Activated T-helper 2 cell treated with anti-CD3 and anti-CD28 coated beads, Interferon-gamma antibody, Interleukin-2, Interleukin-4, amounts not matched to agents 10 μg/mL and 5 μg/mL and 100 μg/mL, durations not matched to agents 14 hours and 24 hours and 36 hours (primary cell): ENCODE measurements at regions of chr17 and their contacts with region 1.

Region 1: DNA sequence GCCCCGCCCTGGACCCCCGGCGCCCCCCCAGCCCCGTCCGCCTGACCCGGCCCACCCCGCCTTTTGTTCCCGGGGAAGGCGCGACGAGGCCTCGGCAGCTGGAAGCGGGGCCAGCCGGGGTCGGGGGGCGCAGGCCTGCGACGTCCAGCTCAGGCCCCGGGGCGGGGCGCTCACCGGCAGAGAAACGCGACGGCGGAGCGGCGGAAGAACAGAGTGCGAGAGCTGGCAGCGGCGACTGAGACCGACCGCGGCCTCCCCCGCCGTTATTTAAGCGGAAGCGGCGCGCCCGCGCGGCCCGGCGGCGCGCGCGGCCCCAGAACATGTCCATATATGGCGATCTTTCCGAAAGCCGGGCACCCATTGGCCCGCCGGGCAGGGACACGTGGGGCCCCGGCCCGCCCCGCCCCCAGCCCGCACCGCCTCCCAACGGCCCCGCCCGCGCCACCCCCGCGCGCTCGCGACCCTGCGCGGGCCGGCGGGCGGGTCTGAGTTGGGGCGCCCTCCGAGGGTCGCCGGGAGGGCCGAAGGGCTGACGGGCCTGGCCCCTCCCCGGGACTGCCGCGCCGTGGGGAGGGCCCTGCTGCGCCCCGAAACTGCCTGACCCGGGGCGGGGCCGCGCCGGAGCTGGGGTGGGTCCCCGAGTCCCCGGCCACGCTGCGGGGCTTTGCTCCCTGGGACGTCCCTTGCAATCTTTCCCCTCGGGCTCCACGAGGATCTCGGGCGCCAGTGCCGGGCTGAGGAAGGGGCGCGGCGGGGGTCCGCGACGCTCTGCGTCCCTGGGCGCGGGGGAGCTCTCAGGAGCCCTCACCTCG is at the start of gene ACTG1:
- DNase-seq: peak; percentile 90
- H3K4me3 Mint-ChIP-seq: peak within 1 kb of the TSS; percentile 97
- H3K27ac Mint-ChIP-seq: peak within 1 kb of the TSS; percentile 90
- H3K4me1 Mint-ChIP-seq: peaks cover 25% of the 10 kb centered on the region
- H3K27me3 Mint-ChIP-seq: no peaks in the 10 kb centered on the region
- total RNA-seq, gene ACTG1: 4,152 and 4,174 TPM in 2 replicates

Region 2: DNA sequence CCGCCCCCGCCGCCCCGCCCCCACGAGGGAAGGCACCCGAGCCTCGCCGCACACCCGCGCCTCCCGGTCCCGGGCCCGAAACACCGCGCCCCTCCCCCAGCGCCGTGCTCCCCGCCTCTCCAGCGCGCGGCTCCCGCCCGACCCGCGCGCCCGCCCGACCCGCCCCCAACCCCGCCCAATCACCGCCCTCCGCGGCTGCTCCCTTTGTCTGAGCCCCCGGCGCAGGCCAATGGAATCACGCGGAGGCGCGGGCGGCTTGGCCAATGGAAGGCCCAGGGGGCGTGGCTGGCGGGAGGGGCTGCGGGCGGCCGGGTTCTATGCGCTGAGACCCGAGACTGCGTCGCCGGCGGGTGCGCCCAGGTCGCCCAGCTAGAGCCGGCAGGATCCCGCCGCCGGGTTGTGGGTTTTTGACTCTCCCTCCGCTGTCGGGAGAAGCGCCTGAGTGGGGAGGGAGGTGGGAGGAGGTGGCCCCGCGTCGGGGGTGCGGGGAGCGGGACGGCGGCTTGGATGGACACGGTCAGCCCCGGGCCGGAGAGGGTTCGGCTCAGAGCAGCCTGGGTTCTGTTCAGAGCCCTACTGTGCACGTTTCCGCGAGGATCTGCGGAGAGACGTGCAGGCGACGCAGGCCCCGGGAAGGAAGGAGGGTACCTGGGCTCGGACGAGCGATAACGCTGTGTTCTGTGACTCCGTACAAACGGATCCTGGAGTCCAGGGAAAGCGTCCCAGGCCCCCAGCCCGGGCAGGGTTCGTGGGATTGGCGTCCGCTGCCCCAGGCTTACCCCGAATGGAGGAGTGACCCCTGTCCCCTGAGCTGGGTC is 166.5 kb before region 1 on chr17:
- intact Hi-C with region 1: loop called (anchors 2 kb)
- DNase-seq: peak; percentile 93
- H3K4me3 Mint-ChIP-seq: peak overlapping the region; percentile 55
- H3K27ac Mint-ChIP-seq: no peak overlapping the region
- H3K4me1 Mint-ChIP-seq: peaks cover 7% of the 10 kb centered on the region
- H3K27me3 Mint-ChIP-seq: peaks cover 40% of the 10 kb centered on the region

Region 3: GRCh38 chr17:81394921-81395599 is 117.7 kb before region 1 on chr17 and contains the start of gene BAHCC1:
- intact Hi-C with region 1: loop called (anchors 5 kb)
- DNase-seq: peak; percentile 73
- H3K4me3 Mint-ChIP-seq: peak within 1 kb of the TSS; percentile 38
- H3K27ac Mint-ChIP-seq: peak within 1 kb of the TSS; percentile 33
- H3K4me1 Mint-ChIP-seq: peaks cover 11% of the 10 kb centered on the region
- H3K27me3 Mint-ChIP-seq: peaks cover 46% of the 10 kb centered on the region
- total RNA-seq, gene BAHCC1: 0.90 and 0.91 TPM in 2 replicates

Region 4: DNA sequence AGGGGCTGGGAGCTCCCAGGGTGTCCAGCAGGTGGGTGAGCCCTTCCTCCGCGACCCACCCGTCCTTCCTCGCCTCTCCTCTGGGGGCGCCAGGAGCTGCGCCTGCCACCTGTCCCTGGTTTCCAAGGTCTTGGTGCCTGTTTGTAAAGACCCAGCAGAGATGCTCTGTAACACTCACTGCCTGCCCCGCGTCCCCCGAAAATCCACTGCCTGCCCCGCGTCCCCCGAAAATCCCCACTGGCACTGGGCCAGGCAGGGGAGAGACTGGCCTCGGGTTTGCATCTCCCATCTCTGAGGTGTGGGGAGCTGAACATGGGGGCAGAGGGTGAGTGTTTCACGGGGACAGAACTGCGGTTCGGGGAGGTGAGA is 71.9 kb before region 1 on chr17:
- intact Hi-C with region 1: no loop called
- DNase-seq: no peak
- H3K4me3 Mint-ChIP-seq: no peak overlapping the region
- H3K27ac Mint-ChIP-seq: no peak overlapping the region
- H3K4me1 Mint-ChIP-seq: no peaks in the 10 kb centered on the region
- H3K27me3 Mint-ChIP-seq: no peaks in the 10 kb centered on the region

Region 5: DNA sequence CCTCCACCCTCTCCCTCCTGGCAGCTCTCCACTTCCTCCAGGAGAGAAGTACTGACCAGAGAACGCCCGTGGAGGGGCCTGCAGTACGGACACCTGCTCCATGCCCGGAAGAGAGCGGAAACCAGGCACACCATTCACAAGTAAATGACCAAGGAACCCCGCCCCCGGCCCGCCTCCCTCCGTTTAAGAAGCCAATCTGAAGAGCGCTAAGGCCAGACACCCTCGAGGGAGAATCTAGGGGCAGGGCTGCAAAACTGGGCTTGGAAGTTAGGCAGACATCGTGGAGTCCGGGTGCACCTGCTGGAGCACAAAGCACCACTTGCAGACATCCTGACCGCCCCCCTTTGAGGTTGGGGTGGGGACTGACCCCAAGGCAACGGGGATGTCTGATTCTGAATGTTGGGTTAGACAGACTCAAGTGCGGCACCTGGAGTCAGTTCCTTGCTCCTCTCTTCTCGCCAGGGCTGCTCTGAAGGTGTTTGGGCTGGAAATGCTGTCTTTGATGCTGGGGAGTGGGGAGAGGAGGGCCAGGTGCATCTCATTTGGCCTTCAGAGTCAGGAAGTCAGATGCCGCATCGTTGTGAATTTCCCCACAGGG is 40.4 kb after region 1 on chr17:
- intact Hi-C with region 1: loop called (anchors 1 kb)
- DNase-seq: peak; percentile 68
- H3K4me3 Mint-ChIP-seq: peak overlapping the region; percentile 87
- H3K27ac Mint-ChIP-seq: peak overlapping the region; percentile 88
- H3K4me1 Mint-ChIP-seq: peaks cover 19% of the 10 kb centered on the region
- H3K27me3 Mint-ChIP-seq: no peaks in the 10 kb centered on the region

Region 6: GRCh38 chr17:81566461-81567126 is 53.8 kb after region 1 on chr17:
- intact Hi-C with region 1: no loop called
- DNase-seq: no peak
- H3K4me3 Mint-ChIP-seq: no peak overlapping the region
- H3K27ac Mint-ChIP-seq: no peak overlapping the region
- H3K4me1 Mint-ChIP-seq: no peaks in the 10 kb centered on the region
- H3K27me3 Mint-ChIP-seq: no peaks in the 10 kb centered on the region

Region 7: DNA sequence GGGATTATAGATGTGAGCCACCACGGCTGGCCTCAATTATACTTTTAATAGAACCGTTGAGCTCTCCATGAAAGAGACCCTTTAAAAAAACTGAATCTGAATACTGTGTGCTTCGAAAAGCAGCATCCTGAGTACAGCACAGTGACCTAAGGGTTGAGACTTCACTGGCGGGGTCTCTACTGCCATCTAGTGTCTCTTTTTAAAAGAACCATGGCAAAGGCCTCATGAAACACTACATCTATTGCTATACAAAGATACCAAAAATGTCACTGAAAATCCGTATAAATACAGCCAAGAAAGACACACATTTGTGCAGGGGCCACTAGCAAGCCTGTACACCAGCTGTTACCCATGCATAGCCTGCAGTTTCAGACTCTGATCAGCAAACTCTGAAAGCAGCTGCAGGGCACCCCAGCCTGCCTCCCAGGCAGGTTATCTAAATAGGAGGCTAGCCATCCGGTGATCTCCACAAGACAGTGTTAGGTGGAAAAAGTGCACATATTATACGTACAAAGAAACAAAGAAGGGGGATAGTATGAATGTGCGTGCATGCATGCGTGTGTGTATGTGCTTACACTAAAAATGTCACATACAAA is 88.9 kb after region 1 on chr17:
- intact Hi-C with region 1: loop called (anchors 5 kb)
- DNase-seq: peak; percentile 24
- H3K4me3 Mint-ChIP-seq: no peak overlapping the region
- H3K27ac Mint-ChIP-seq: peak overlapping the region; percentile 52
- H3K4me1 Mint-ChIP-seq: peaks cover 5% of the 10 kb centered on the region
- H3K27me3 Mint-ChIP-seq: no peaks in the 10 kb centered on the region

Region 8: GRCh38 chr17:81722184-81723120 is 209.7 kb after region 1 on chr17:
- intact Hi-C with region 1: no loop called
- DNase-seq: no peak
- H3K4me3 Mint-ChIP-seq: no peak overlapping the region
- H3K27ac Mint-ChIP-seq: no peak overlapping the region
- H3K4me1 Mint-ChIP-seq: no peaks in the 10 kb centered on the region
- H3K27me3 Mint-ChIP-seq: peaks cover 6% of the 10 kb centered on the region